ENCODE measurements at regions of chr1 and their contacts with region 1.

Region 1: GRCh38 chr1:8482979-8483391 is 165.1 kb downstream of the SLC45A1 start:
- DNase-seq: no peak
- CTCF ChIP-seq: no peak

Region 2: DNA sequence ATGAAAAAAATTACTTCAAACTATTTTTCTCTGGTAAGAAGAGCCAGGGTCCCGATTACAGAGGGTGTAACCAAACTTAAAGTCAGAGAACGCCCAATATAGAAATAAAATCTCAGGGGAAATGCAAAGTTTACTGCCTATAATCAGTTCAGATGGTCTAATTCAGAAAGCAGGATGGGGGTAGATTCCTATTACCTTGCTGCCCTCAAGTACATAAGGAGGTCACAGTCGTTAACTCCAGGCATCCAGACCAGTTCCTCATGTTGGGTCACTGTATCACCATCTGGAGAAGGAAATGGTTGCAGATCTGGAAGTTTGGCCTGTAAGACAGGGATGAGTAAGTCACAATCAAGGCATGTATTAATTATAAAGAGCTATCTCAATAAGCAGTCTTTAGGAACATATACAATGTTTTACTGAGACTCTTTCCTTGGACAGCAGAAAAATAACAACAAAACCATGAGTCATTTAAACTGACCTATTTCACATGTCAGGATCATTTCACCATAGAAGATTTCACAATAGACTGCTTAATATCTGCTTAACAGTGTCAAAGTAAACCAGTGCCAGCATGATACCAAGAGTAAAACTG is 14.3 kb after region 1 on chr1:
- CTCF ChIA-PET with region 1: interaction called, 15 read pairs
- POLR2A ChIA-PET with region 1: no interaction called
- DNase-seq: no peak
- CTCF ChIP-seq: no peak

Measured in GM10248 (cell line).